CD4-positive, alpha-beta T cell (primary cell): ENCODE measurements at regions of chr20 and their contacts with region 1.

Region 1: DNA sequence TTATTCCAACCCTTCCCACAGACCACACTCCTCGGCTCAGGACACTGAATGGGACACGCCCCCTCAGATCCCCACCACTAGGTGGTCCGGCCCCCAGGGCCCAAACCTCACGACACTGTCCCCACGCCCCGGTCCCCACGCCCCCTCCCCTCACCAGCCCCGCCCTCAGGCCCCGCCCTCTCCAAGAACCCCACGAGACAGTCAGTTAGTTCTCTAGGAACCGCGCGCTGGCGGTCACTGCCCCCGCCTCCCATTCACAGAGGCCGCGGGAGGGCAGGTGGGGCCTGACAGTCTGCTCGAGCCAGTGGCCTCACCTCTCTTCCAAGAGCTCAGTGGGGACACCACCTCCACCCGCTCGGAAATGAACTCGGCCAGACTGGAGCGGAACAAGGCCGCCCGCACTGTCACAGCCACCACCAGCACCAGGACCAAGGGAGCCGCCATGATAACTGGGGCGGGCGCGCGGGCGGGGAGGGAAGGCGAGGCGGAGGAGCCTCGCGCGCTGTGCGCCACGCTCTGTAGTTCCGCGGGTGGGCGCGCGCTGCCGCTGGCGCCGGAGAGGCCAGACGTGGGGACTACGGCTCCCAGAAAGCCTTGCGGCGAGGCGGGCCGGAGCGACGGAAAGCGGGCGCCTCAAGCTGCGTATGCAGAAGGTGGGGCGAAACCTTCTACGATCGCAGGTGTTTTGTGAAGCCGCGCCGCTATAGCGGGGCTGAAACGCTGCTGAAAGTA is at the start of gene PIGU:
- DNase-seq: peak; percentile 93 to 98 (median 95)
- ATAC-seq: peak; percentile 96
- H3K4me3 ChIP-seq: peak within 1 kb of the TSS; percentile 88
- H3K4me3 Mint-ChIP-seq: peak within 1 kb of the TSS; percentile 93
- H3K27ac ChIP-seq: peak within 1 kb of the TSS; percentile 53 to 87
- H3K27ac Mint-ChIP-seq: peak within 1 kb of the TSS; percentile 88
- H3K4me1 ChIP-seq: peaks cover 13% of the 10 kb centered on the region
- H3K4me1 Mint-ChIP-seq: peaks cover 26% of the 10 kb centered on the region
- H3K27me3 ChIP-seq: no peaks in the 10 kb centered on the region
- H3K27me3 Mint-ChIP-seq: no peaks in the 10 kb centered on the region
- CTCF ChIP-seq: peak; percentile 21
- total RNA-seq, gene PIGU: 4.6 to 5.5 TPM

Region 2: GRCh38 chr20:34363062-34363464 is 313.7 kb before region 1 on chr20 and contains the start of gene ITCH:
- CTCF ChIA-PET with region 1: no interaction called
- POLR2A ChIA-PET with region 1: interaction called, 7 read pairs
- intact Hi-C with region 1: loop called in 1 of 2 experiments (anchors 5 kb)
- DNase-seq: peak; percentile 86 to 96 (median 89)
- ATAC-seq: peak; percentile 100
- H3K4me3 ChIP-seq: peak within 1 kb of the TSS; percentile 98
- H3K4me3 Mint-ChIP-seq: peak within 1 kb of the TSS; percentile 100
- H3K27ac ChIP-seq: peak within 1 kb of the TSS; percentile 72 to 78
- H3K27ac Mint-ChIP-seq: peak within 1 kb of the TSS; percentile 95
- H3K4me1 ChIP-seq: peaks cover 47% of the 10 kb centered on the region
- H3K4me1 Mint-ChIP-seq: peaks cover 37% of the 10 kb centered on the region
- H3K27me3 ChIP-seq: no peaks in the 10 kb centered on the region
- H3K27me3 Mint-ChIP-seq: no peaks in the 10 kb centered on the region
- CTCF ChIP-seq: no peak
- total RNA-seq, gene ITCH: 44.2 to 47.0 TPM

Region 3: GRCh38 chr20:34558320-34559218 is 118.2 kb before region 1 on chr20 and contains the start of gene MAP1LC3A:
- CTCF ChIA-PET with region 1: interaction called, 3 read pairs
- POLR2A ChIA-PET with region 1: interaction called, 10 read pairs
- intact Hi-C with region 1: loop called in 1 of 2 experiments (anchors 5 kb)
- DNase-seq: peak; percentile 71 to 98 (median 92)
- ATAC-seq: peak; percentile 81
- H3K4me3 ChIP-seq: peak within 1 kb of the TSS; percentile 82
- H3K4me3 Mint-ChIP-seq: peak within 1 kb of the TSS; percentile 84
- H3K27ac ChIP-seq: peak within 1 kb of the TSS; percentile 87 to 94
- H3K27ac Mint-ChIP-seq: peak within 1 kb of the TSS; percentile 90
- H3K4me1 ChIP-seq: peaks cover 11% of the 10 kb centered on the region
- H3K4me1 Mint-ChIP-seq: peaks cover 14% of the 10 kb centered on the region
- H3K27me3 ChIP-seq: no peaks in the 10 kb centered on the region
- H3K27me3 Mint-ChIP-seq: no peaks in the 10 kb centered on the region
- CTCF ChIP-seq: no peak
- total RNA-seq, gene MAP1LC3A: 17.5 to 17.7 TPM

Region 4: DNA sequence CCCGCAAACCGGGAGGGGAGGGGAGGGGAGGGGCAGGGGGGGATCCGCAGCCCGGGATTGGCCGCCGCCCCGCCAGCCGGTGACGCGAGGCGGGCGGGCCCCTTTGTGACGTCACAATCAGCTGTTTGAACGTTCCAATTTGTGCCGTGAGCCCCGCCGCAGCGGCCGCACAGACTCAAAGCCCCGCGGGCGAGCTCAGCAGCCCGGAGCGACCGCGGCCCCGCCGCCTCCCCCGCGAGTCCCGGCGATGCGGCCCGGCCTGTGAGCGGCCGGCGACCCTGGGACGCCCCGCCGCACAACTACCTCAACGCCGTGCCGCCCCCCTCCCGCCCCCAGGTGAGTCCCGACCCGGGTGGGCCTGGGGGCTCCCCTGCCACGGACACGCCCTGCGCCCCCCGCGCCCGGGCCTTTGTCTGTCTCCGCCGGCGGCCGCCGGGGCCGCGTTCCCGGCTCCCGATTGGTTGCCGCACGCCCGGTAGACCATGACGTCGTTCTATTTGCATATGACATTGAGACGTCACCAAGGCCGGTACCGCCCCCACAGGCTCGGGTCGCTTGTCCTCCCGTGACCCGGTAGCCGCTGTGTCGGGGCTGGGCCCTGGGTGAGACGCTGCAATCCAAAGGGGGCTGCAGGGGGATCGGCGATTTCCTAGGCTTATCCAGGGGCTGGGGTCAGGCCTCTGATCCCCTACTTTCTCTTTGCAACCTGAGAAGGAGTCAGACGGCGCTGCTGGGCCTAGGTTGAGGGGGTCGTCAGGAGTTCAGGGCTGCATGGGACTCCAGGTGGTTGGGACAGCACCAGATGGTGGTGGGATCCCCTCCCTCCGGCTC is 27.6 kb after region 1 on chr20 and contains the start of gene TP53INP2:
- CTCF ChIA-PET with region 1: interaction called, 7 read pairs
- POLR2A ChIA-PET with region 1: interaction called, 24 read pairs
- intact Hi-C with region 1: loop called (anchors 1 kb)
- DNase-seq: peak; percentile 67 to 96 (median 84)
- ATAC-seq: peak; percentile 58
- H3K4me3 ChIP-seq: peak within 1 kb of the TSS; percentile 94
- H3K4me3 Mint-ChIP-seq: peak within 1 kb of the TSS; percentile 97
- H3K27ac ChIP-seq: peak within 1 kb of the TSS; percentile 59 to 69
- H3K27ac Mint-ChIP-seq: peak within 1 kb of the TSS; percentile 94
- H3K4me1 ChIP-seq: peaks cover 30% of the 10 kb centered on the region
- H3K4me1 Mint-ChIP-seq: peaks cover 36% of the 10 kb centered on the region
- H3K27me3 ChIP-seq: no peaks in the 10 kb centered on the region
- H3K27me3 Mint-ChIP-seq: peaks cover 13% of the 10 kb centered on the region
- CTCF ChIP-seq: no peak
- total RNA-seq, gene TP53INP2: 65.8 to 72.7 TPM

Region 5: DNA sequence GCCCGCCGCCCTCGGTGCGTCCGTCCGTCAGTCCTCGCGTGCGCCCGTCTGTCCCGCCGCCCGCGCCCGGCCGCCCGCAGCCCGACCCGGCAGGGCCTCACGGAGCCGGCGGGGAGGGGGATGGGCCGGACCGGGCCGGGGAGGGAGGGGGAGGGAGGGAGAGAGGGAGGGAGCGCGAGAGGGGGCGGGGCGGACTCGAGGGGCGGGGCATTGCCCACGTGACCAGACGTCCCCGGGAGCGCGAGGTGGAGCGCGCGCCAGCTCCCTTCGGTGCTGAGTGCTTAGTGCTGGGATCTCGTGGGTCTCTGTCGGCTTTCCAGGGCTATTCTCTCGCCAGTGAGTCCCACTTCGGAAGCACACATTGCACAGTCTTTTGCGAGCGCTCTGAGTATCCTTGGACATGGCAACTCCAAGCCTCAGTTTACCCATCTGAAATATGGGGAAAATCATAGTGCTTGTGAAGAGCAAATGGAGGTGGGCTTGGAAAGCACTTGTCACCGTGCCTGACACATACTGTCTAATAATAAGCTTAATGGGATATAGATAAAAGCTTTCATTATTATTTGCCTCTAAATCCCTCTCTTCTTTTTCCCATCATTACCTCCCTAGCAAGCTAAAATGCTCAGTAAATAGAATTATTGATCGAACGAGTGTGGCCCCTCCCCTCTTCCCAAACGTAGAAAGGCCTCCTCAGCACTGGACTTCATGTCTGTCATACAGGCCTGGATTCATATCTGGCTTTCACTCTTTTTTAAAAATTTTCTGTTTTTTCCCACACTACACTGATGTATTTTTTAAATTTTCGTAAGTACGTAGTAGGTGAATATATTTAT is 148.9 kb after region 1 on chr20 and contains the start of gene NCOA6:
- CTCF ChIA-PET with region 1: no interaction called
- POLR2A ChIA-PET with region 1: interaction called, 5 read pairs
- intact Hi-C with region 1: loop called in 1 of 2 experiments (anchors 2 kb)
- DNase-seq: peak; percentile 77 to 95 (median 84)
- ATAC-seq: peak; percentile 75
- H3K4me3 ChIP-seq: peak within 1 kb of the TSS; percentile 70
- H3K4me3 Mint-ChIP-seq: peak within 1 kb of the TSS; percentile 99
- H3K27ac ChIP-seq: peak within 1 kb of the TSS; percentile 35 to 66
- H3K27ac Mint-ChIP-seq: peak within 1 kb of the TSS; percentile 92
- H3K4me1 ChIP-seq: peaks cover 35% of the 10 kb centered on the region
- H3K4me1 Mint-ChIP-seq: peaks cover 47% of the 10 kb centered on the region
- H3K27me3 ChIP-seq: no peaks in the 10 kb centered on the region
- H3K27me3 Mint-ChIP-seq: no peaks in the 10 kb centered on the region
- CTCF ChIP-seq: no peak
- total RNA-seq, gene NCOA6: 14.6 to 16.3 TPM

Region 6: GRCh38 chr20:34891166-34892062 is 214.6 kb after region 1 on chr20:
- CTCF ChIA-PET with region 1: no interaction called
- POLR2A ChIA-PET with region 1: no interaction called
- intact Hi-C with region 1: no loop called
- DNase-seq: peak in 5 of 14 experiments; percentile 7 to 64 (median 32)
- ATAC-seq: peak; percentile 89
- H3K4me3 ChIP-seq: no peak overlapping the region
- H3K4me3 Mint-ChIP-seq: no peak overlapping the region
- H3K27ac ChIP-seq: no peak overlapping the region
- H3K27ac Mint-ChIP-seq: peak overlapping the region; percentile 45
- H3K4me1 ChIP-seq: peaks cover 8% of the 10 kb centered on the region
- H3K4me1 Mint-ChIP-seq: peaks cover 33% of the 10 kb centered on the region
- H3K27me3 ChIP-seq: no peaks in the 10 kb centered on the region
- H3K27me3 Mint-ChIP-seq: no peaks in the 10 kb centered on the region
- CTCF ChIP-seq: no peak

Region 7: GRCh38 chr20:36460648-36461599 is 1784.1 kb after region 1 on chr20:
- CTCF ChIA-PET with region 1: no interaction called
- POLR2A ChIA-PET with region 1: no interaction called
- intact Hi-C with region 1: loop called in 1 of 2 experiments (anchors 10 kb)
- DNase-seq: peak; percentile 79 to 98 (median 90)
- ATAC-seq: peak; percentile 75
- H3K4me3 ChIP-seq: peak overlapping the region; percentile 82
- H3K4me3 Mint-ChIP-seq: peak overlapping the region; percentile 89
- H3K27ac ChIP-seq: peak overlapping the region; percentile 76 to 93
- H3K27ac Mint-ChIP-seq: peak overlapping the region; percentile 84
- H3K4me1 ChIP-seq: peaks cover 50% of the 10 kb centered on the region
- H3K4me1 Mint-ChIP-seq: peaks cover 50% of the 10 kb centered on the region
- H3K27me3 ChIP-seq: no peaks in the 10 kb centered on the region
- H3K27me3 Mint-ChIP-seq: no peaks in the 10 kb centered on the region
- CTCF ChIP-seq: no peak